ENCODE measurements at regions of chr5 and their contacts with region 1.

Region 1: DNA sequence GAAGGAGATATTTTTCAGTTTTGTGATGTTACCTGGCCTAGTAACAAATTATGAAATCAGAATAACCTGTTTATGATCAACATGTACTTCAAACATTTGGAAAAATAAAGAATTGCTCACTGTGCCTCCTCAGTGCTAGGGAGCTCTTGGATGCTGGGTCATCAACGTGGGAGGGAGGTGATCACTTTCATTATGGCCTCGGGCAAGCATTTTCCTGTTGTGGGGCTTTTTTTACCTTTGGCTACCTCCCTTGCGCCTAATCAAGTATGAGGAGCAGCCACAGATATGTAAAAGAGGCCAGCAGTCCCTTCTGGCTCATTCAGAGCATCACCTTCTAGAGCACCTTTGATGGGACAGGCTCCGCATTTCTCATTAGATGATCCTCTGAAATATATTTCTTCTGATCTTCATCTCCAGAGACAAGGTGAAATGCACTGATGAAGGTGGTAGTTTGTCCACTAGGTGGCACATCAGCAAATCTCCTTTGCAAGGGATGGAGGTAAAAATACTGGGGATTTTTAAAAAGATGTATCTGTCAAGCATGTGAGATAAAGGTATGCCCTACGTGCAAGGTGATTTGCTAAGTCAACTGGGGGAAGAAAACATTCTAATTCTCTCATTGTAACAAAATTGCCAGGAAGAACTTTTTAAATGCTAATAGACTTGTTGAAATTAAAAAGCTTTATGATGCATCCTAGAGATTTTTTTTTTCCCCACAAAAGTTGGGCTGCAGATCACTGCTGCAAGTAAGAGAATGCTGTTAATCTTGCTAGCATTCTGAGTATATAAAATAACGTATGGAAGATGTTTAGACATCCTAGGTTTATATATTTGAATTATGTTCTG is 218.2 kb downstream of the MAST4 start:
- DNase-seq: peak; percentile 59 to 66
- ATAC-seq: peak; percentile 85 to 90; a peak in 5 of 6 replicates
- H3K4me3 ChIP-seq: no peak overlapping the region
- H3K27ac ChIP-seq: peak overlapping the region in 1 of 2 experiments; percentile 34; a peak in 1 of 6 replicates
- H3K4me1 ChIP-seq: peaks cover 8% of the 10 kb centered on the region; the same call in 2 of the 3 replicates
- CTCF ChIP-seq: peak; percentile 90
- EP300 ChIP-seq: no peak
- POLR2A ChIP-seq: no peak
- RAD21 ChIP-seq: peak; percentile 73

Region 2: GRCh38 chr5:66828548-66829357 is 14.4 kb after region 1 on chr5:
- CTCF ChIA-PET with region 1: interaction called, 22 read pairs
- POLR2A ChIA-PET with region 1: no interaction called
- DNase-seq: no peak
- ATAC-seq: peak in 1 of 2 experiments; percentile 36; a peak in 2 of 6 replicates
- H3K4me3 ChIP-seq: no peak overlapping the region
- H3K27ac ChIP-seq: no peak overlapping the region
- H3K4me1 ChIP-seq: peaks cover 18% of the 10 kb centered on the region
- CTCF ChIP-seq: no peak
- EP300 ChIP-seq: no peak
- POLR2A ChIP-seq: no peak
- RAD21 ChIP-seq: no peak

Region 3: GRCh38 chr5:66864331-66864840 is 50.0 kb after region 1 on chr5:
- CTCF ChIA-PET with region 1: interaction called, 99 read pairs
- POLR2A ChIA-PET with region 1: no interaction called
- DNase-seq: peak; percentile 14 to 67
- ATAC-seq: peak; percentile 83 to 95
- H3K4me3 ChIP-seq: no peak overlapping the region
- H3K27ac ChIP-seq: peak overlapping the region in 1 of 2 experiments; percentile 20; a peak in 1 of 6 replicates
- H3K4me1 ChIP-seq: 0 out of 3 replicates have a peak, but pooled peaks cover 4% of the 10 kb centered on the region
- CTCF ChIP-seq: peak; percentile 73
- EP300 ChIP-seq: no peak
- POLR2A ChIP-seq: no peak
- RAD21 ChIP-seq: peak; percentile 76 to 78

Region 4: DNA sequence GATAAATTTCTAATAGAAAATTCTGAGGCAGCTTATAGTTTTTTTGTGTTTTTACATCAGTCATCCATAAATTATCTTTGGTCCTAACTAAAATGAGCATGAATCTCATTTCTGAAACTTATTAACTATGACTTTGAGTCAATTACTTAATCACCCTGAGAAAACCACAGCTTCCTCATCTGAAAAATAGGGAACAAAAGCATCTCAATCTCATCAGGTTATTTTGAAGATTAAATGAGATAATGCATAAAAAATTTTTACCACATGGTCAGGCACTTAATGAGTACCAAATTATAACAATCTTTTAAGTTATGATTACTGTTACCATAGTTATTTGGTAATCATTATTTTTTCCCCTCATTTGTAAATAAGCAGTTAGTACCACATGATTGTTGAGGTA is 60.9 kb after region 1 on chr5:
- CTCF ChIA-PET with region 1: interaction called, 13 read pairs
- POLR2A ChIA-PET with region 1: no interaction called
- DNase-seq: no peak
- ATAC-seq: no peak
- H3K4me3 ChIP-seq: no peak overlapping the region
- H3K27ac ChIP-seq: no peak overlapping the region
- H3K4me1 ChIP-seq: peaks cover 24% of the 10 kb centered on the region
- CTCF ChIP-seq: no peak
- EP300 ChIP-seq: no peak
- POLR2A ChIP-seq: no peak
- RAD21 ChIP-seq: no peak